ENCODE measurements at regions of chr5 and their contacts with region 1.

Region 1: DNA sequence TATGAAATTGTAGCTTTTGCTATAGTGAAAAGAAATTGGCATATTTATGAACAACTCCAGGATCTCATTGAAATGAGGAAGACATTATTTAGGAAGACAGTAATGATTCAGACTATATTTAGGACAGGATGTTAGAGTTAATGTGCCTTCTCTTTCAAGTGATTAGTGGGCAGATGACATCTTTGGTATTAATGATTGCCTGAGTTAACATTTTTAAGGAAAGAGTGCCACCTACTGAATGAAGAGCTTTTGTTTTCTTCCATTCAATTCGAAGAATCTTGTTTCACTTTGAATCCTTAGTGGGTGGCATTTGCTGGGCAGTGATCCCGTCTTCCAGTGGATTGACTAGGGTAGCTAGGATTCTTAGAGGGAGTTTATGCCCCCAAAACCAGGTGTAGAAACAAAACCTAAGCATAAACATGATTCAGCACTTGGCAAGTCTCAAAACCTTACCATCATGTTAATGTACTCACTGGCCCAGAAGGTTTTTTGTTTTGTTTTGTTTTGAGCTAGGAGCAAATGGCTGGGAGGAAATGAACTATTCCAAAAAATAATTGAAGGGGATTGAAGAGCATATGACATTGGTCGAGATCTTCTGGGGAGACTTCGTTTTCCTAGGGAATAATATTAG is 23.2 kb downstream of the MAP3K1 start:
- DNase-seq: peak; percentile 81
- ATAC-seq: peak; percentile 70
- H3K4me3 ChIP-seq: peak overlapping the region in 1 of 5 experiments; percentile 29
- H3K4me3 Mint-ChIP-seq: peak overlapping the region; percentile 47
- H3K27ac ChIP-seq: peak overlapping the region; percentile 48 to 85
- H3K27ac Mint-ChIP-seq: peak overlapping the region; percentile 74
- H3K4me1 ChIP-seq: peaks cover 97% of the 10 kb centered on the region in 2 donors
- H3K4me1 Mint-ChIP-seq: peaks cover 91% of the 10 kb centered on the region
- H3K27me3 ChIP-seq: no peaks in the 10 kb centered on the region
- H3K27me3 Mint-ChIP-seq: no peaks in the 10 kb centered on the region
- CTCF ChIP-seq: peak; percentile 75

Region 2: DNA sequence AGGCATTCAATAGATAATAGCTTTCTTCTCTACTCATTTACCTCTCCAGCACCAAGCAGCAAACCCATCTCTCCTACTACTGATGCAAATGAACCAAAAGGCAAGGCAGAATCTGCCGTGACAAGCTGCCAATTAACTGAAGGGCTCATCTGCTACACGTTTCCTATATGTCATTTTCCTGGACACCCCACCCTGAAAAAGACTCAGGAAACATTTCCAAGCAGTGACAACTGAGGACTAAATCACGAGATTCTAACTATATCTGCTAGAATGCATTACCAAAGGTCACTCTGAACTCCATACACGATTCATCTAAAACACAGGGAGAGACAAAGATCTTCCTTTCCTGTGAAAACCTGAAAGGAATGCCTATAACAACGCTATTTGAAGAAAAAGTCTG is 1316.6 kb before region 1 on chr5:
- CTCF ChIA-PET with region 1: no interaction called
- POLR2A ChIA-PET with region 1: no interaction called
- intact Hi-C with region 1: no loop called
- DNase-seq: no peak
- ATAC-seq: no peak
- H3K4me3 ChIP-seq: no peak overlapping the region
- H3K4me3 Mint-ChIP-seq: no peak overlapping the region
- H3K27ac ChIP-seq: no peak overlapping the region
- H3K27ac Mint-ChIP-seq: no peak overlapping the region
- H3K4me1 ChIP-seq: no peaks in the 10 kb centered on the region
- H3K4me1 Mint-ChIP-seq: no peaks in the 10 kb centered on the region
- H3K27me3 ChIP-seq: no peaks in the 10 kb centered on the region
- H3K27me3 Mint-ChIP-seq: no peaks in the 10 kb centered on the region
- CTCF ChIP-seq: no peak

Region 3: DNA sequence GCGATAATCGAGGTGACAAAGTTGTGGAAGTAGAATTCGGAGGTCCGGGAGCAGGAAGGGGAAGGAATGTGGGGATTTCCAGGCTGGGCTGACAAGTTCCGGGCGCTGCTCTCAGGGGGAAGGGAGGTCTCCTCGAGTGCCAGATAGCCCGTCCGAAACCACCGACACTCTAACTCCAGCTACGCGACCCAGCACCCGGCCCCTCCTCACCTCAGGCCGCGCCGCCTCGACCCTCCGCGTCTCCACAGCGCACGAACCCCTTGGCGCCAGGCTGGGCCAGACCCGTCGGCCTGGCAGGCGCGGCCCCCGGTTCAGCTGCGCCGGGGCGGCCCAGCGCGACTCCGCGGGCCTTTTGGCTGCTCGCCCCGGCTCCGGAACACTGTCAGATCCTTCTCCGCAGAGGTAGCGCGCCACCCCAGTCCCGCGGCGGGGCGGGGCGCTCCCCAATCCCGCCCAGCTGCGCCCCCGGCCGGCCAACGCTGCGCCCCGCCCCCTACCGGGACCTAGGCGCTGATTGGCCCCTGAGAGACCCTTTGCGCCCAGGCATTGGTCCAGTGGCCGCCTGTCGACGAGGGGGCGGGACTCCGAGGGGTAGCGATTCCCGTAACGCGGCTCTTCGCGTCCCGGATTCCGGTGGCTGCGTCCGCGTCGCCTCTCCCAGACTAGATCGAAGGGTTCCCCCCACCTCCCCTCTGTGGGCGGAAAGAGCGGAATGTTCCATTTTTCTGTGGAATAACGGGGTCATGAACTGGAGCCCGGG is 843.8 kb before region 1 on chr5 and contains the start of gene IL6ST:
- CTCF ChIA-PET with region 1: no interaction called
- POLR2A ChIA-PET with region 1: no interaction called
- intact Hi-C with region 1: loop called (anchors 10 kb)
- DNase-seq: peak; percentile 96
- ATAC-seq: peak; percentile 94
- H3K4me3 ChIP-seq: peak within 1 kb of the TSS; percentile 75 to 97 (median 91)
- H3K4me3 Mint-ChIP-seq: peak within 1 kb of the TSS; percentile 89
- H3K27ac ChIP-seq: peak within 1 kb of the TSS; percentile 75 to 94
- H3K27ac Mint-ChIP-seq: peak within 1 kb of the TSS; percentile 78
- H3K4me1 ChIP-seq: peaks cover 11 to 18% of the 10 kb centered on the region in 2 donors
- H3K4me1 Mint-ChIP-seq: peaks cover 33% of the 10 kb centered on the region
- H3K27me3 ChIP-seq: no peaks in the 10 kb centered on the region
- H3K27me3 Mint-ChIP-seq: peaks cover 4% of the 10 kb centered on the region
- CTCF ChIP-seq: no peak
- total RNA-seq, gene IL6ST: 28.0 and 31.1 TPM in 2 replicates

Region 4: DNA sequence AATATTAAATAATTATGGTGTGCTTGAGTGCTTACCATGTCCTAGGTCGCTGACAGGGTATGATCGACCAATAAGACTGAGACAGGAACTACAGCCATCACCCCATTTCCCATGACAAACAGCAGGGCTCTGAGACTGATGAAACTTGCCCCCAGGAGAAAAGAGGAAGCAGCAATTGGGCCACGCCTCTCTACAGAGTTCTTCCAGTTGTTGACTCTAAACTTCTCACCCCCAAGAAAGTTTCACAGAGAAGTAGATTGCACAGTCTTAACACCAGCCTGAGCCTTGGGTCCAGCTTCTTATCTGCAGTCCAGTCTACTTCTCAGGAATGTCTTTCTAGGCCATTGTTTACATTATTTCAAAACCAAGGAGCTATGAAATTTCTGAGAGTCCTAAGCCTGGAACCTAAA is 423.2 kb before region 1 on chr5:
- CTCF ChIA-PET with region 1: interaction called, 25 read pairs
- POLR2A ChIA-PET with region 1: interaction called, 4 read pairs
- intact Hi-C with region 1: loop called (anchors 2 kb)
- DNase-seq: peak; percentile 89
- ATAC-seq: peak; percentile 71
- H3K4me3 ChIP-seq: peak overlapping the region in 3 of 5 experiments; percentile 21 to 56 (median 21)
- H3K4me3 Mint-ChIP-seq: peak overlapping the region; percentile 76
- H3K27ac ChIP-seq: peak overlapping the region; percentile 95 to 98
- H3K27ac Mint-ChIP-seq: peak overlapping the region; percentile 96
- H3K4me1 ChIP-seq: peaks cover 73 to 74% of the 10 kb centered on the region in 2 donors
- H3K4me1 Mint-ChIP-seq: peaks cover 80% of the 10 kb centered on the region
- H3K27me3 ChIP-seq: no peaks in the 10 kb centered on the region
- H3K27me3 Mint-ChIP-seq: no peaks in the 10 kb centered on the region
- CTCF ChIP-seq: no peak

Region 5: DNA sequence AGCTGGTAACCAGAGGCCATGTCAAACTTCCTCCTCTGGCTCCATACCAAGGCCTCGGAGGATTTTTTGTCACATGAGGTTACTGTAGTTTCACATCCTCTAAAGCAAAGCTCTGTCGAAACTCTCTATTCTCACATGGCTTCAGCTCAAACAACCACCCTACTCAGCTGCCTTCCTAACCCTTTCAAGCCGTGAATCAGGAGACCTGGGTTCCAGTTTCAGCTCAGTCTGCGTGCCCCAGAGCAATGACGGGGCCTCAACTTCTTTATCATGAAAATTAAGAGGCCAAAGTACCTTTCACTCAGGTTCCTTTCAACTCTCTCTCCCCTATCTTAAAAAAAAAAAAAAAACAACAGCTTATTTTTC is 168.4 kb before region 1 on chr5:
- CTCF ChIA-PET with region 1: interaction called, 26 read pairs
- POLR2A ChIA-PET with region 1: interaction called, 8 read pairs
- intact Hi-C with region 1: no loop called
- DNase-seq: peak; percentile 95
- ATAC-seq: no peak
- H3K4me3 ChIP-seq: no peak overlapping the region
- H3K4me3 Mint-ChIP-seq: peak overlapping the region; percentile 75
- H3K27ac ChIP-seq: peak overlapping the region; percentile 97 to 98
- H3K27ac Mint-ChIP-seq: peak overlapping the region; percentile 97
- H3K4me1 ChIP-seq: peaks cover 58% of the 10 kb centered on the region in 2 donors
- H3K4me1 Mint-ChIP-seq: peaks cover 74% of the 10 kb centered on the region
- H3K27me3 ChIP-seq: no peaks in the 10 kb centered on the region
- H3K27me3 Mint-ChIP-seq: no peaks in the 10 kb centered on the region
- CTCF ChIP-seq: no peak

Region 6: DNA sequence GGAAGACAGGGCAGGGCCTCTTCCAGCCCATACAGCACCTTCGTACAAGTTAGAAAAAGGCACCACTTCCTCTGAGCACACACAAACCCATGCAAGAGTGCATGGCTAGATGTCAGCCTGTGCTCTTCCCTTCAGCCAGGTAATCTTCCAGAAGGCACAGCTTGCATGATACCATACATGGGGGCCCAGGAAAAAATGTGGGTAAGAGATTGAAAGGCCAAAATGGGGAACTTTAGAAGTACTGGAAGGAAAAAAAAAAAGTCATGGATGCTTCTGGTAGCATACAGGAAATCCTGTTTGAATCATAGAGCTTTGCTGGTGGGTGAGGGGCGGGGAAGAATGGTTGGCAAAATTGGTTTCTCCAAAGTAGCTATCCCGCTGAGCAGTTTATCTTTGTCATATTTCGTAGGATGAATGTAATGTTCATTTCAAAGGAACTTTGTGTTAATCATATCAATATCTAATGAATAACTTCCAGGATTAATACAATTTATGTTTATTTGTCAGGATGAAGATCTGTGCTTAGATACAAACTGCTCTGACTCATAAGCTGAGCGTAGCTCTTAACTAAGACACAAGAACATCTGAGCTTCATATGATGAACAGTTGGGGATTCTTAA is 101.4 kb before region 1 on chr5:
- CTCF ChIA-PET with region 1: interaction called, 11 read pairs
- POLR2A ChIA-PET with region 1: no interaction called
- intact Hi-C with region 1: no loop called
- DNase-seq: peak; percentile 34
- ATAC-seq: peak; percentile 18
- H3K4me3 ChIP-seq: peak overlapping the region in 1 of 5 experiments; percentile 48
- H3K4me3 Mint-ChIP-seq: peak overlapping the region; percentile 73
- H3K27ac ChIP-seq: peak overlapping the region; percentile 79 to 91
- H3K27ac Mint-ChIP-seq: peak overlapping the region; percentile 87
- H3K4me1 ChIP-seq: peaks cover 63% of the 10 kb centered on the region in 2 donors
- H3K4me1 Mint-ChIP-seq: peaks cover 63% of the 10 kb centered on the region
- H3K27me3 ChIP-seq: no peaks in the 10 kb centered on the region
- H3K27me3 Mint-ChIP-seq: no peaks in the 10 kb centered on the region
- CTCF ChIP-seq: no peak

Region 7: DNA sequence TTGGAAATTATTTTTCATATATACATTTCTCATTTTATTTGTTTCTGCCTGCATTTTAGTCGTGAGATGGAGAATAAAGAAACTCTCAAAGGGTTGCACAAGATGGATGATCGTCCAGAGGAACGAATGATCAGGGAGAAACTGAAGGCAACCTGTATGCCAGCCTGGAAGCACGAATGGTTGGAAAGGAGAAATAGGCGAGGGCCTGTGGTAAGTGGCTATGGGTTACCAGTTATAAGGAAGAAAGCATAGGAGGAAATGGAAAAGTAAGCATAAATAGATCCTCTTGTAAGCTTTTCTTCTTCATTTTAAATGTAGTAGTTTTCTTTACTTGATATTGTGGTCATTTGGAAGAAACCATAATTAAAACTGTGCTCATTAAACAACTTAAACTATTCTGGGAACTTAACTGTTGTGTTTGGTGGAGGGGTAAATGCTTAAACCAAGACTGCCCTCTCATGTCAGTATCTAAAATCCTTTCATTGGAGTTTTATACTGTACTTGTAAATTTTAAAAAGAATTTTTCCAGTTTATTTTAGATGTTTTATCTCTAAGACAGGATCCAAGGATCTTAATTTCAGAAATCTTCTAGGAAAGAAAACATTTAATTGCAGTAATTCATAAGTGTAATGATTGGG is 18.1 kb after region 1 on chr5:
- CTCF ChIA-PET with region 1: interaction called, 17 read pairs
- POLR2A ChIA-PET with region 1: interaction called, 7 read pairs
- intact Hi-C with region 1: loop called (anchors 2 kb)
- DNase-seq: no peak
- ATAC-seq: no peak
- H3K4me3 ChIP-seq: no peak overlapping the region
- H3K4me3 Mint-ChIP-seq: peak overlapping the region; percentile 48
- H3K27ac ChIP-seq: peak overlapping the region in 1 of 2 donors; percentile 84
- H3K27ac Mint-ChIP-seq: peak overlapping the region; percentile 68
- H3K4me1 ChIP-seq: peaks cover 34 to 53% of the 10 kb centered on the region in 2 donors
- H3K4me1 Mint-ChIP-seq: peaks cover 62% of the 10 kb centered on the region
- H3K27me3 ChIP-seq: no peaks in the 10 kb centered on the region
- H3K27me3 Mint-ChIP-seq: no peaks in the 10 kb centered on the region
- CTCF ChIP-seq: no peak

Region 8: GRCh38 chr5:57025961-57026360 is 187.4 kb after region 1 on chr5:
- CTCF ChIA-PET with region 1: no interaction called
- POLR2A ChIA-PET with region 1: no interaction called
- intact Hi-C with region 1: no loop called
- DNase-seq: no peak
- ATAC-seq: no peak
- H3K4me3 ChIP-seq: no peak overlapping the region
- H3K4me3 Mint-ChIP-seq: no peak overlapping the region
- H3K27ac ChIP-seq: no peak overlapping the region
- H3K27ac Mint-ChIP-seq: no peak overlapping the region
- H3K4me1 ChIP-seq: peaks cover 9 to 11% of the 10 kb centered on the region in 2 donors
- H3K4me1 Mint-ChIP-seq: peaks cover 11% of the 10 kb centered on the region
- H3K27me3 ChIP-seq: no peaks in the 10 kb centered on the region
- H3K27me3 Mint-ChIP-seq: no peaks in the 10 kb centered on the region
- CTCF ChIP-seq: no peak

Region 9: DNA sequence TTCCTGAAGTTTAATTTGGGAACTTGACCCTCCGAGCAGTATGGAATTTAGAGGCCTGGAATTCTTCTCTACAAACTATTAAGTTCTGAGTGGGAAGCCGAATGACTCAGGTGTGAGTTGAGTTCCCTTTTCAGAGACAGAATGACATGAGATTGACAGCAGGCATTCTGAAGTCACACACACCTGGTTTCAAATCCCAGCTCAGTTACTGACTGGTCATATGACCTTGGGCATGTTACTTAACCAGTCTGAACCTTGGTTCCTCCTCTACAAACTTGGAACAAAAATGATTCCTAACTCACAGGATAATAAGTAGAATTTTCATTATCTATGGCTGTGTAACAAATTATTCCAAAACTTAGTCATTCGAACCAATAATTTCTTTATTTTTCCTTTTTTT is 289.8 kb after region 1 on chr5:
- CTCF ChIA-PET with region 1: no interaction called
- POLR2A ChIA-PET with region 1: no interaction called
- intact Hi-C with region 1: no loop called
- DNase-seq: no peak
- ATAC-seq: no peak
- H3K4me3 ChIP-seq: no peak overlapping the region
- H3K4me3 Mint-ChIP-seq: no peak overlapping the region
- H3K27ac ChIP-seq: no peak overlapping the region
- H3K27ac Mint-ChIP-seq: no peak overlapping the region
- H3K4me1 ChIP-seq: no peaks in the 10 kb centered on the region
- H3K4me1 Mint-ChIP-seq: no peaks in the 10 kb centered on the region
- H3K27me3 ChIP-seq: no peaks in the 10 kb centered on the region
- H3K27me3 Mint-ChIP-seq: peaks cover 2% of the 10 kb centered on the region
- CTCF ChIP-seq: no peak